Activated naive CD4-positive, alpha-beta T cell treated with anti-CD3 and anti-CD28 coated beads for 36 hours (primary cell): ENCODE measurements at regions of chr17 and their contacts with region 1.

Region 1: GRCh38 chr17:76737082-76737675 is at the start of gene SRSF2:
- DNase-seq: peak; percentile 99
- H3K4me3 Mint-ChIP-seq: peak within 1 kb of the TSS; percentile 94
- H3K27ac Mint-ChIP-seq: peak within 1 kb of the TSS; percentile 98
- H3K4me1 Mint-ChIP-seq: peaks cover 41% of the 10 kb centered on the region
- H3K27me3 Mint-ChIP-seq: no peaks in the 10 kb centered on the region
- total RNA-seq, gene SRSF2: 241 to 263 TPM

Region 2: GRCh38 chr17:76264755-76265596 is 472.2 kb before region 1 on chr17 and contains the start of gene UBALD2:
- CTCF ChIA-PET with region 1: no interaction called
- intact Hi-C with region 1: loop called (anchors 5 kb)
- DNase-seq: peak; percentile 99
- H3K4me3 Mint-ChIP-seq: peak within 1 kb of the TSS; percentile 88
- H3K27ac Mint-ChIP-seq: peak within 1 kb of the TSS; percentile 100
- H3K4me1 Mint-ChIP-seq: peaks cover 48% of the 10 kb centered on the region
- H3K27me3 Mint-ChIP-seq: no peaks in the 10 kb centered on the region
- total RNA-seq, gene UBALD2: 467 to 472 TPM

Region 3: DNA sequence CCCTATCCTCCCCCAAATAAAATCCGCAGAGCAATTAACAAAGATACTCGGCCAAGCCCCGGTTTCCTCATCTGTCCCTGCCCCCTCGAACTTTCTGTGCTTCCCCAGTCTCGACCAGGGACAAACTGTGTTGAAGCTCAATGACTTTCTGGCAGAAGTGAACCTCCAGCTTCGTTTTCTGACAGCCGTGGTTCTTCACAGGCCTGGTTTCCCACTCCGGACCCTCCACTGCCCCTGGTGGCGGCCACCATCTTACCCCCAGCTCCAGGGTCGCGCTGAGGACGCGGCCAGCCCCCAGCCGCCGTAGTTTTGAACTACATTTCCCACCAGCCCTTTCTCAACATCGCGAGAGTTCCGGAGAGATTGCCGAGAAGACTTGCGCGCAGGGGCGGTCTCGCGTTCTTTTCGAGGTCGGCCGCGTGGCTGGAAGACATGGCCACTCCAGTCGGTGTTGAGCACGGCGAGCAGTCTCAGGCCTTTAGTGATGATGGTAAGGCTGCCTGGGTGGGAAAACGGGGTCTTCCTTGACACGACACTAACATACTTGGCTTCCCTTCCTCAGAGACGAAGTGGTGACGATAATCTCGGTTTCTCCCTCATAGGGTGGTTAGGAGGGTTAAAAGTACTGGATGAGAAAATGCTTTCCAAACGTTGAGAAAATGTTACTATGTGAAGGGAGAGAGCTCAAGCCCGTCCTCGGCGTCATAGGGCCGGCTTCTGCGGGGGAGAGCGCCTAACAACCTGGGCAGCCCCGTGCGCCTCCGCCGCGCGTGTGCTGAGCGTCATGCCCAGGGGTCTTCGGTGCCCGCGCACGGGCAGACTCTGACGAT is 179.6 kb before region 1 on chr17:
- CTCF ChIA-PET with region 1: interaction called, 3 read pairs
- intact Hi-C with region 1: loop called (anchors 1 kb)
- DNase-seq: peak; percentile 97
- H3K4me3 Mint-ChIP-seq: peak overlapping the region; percentile 96
- H3K27ac Mint-ChIP-seq: peak overlapping the region; percentile 96
- H3K4me1 Mint-ChIP-seq: peaks cover 54% of the 10 kb centered on the region
- H3K27me3 Mint-ChIP-seq: no peaks in the 10 kb centered on the region

Region 4: DNA sequence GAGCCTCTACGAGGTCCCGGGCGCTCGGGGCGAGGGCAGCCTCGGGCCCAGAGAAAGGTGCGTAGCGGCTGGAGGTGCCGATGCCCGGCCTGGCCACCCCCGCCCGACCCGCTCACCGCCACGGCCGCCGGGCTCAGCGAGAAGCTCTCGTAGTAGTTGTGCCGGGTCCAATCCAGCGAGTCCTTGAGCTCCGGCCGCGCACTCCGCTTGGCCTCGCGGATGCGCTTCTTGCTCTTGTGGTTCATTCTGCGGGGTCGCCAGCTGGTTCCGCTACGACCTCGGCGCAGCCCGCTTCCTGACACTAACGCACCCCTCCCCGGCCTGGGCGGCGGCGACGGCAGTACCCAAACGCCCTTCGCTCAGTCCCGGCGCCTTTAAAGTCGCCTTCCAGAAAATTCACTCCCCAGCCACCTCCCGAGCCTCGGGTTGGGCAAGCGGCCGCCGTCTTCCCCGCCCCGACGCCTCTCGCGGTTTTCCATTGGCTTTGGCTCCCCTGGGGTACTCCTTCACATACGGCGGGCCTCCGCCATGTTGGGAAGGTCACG is 10.9 kb before region 1 on chr17 and contains the start of gene JMJD6:
- CTCF ChIA-PET with region 1: no interaction called
- intact Hi-C with region 1: loop called (anchors 1 kb)
- DNase-seq: peak; percentile 98
- H3K4me3 Mint-ChIP-seq: peak within 1 kb of the TSS; percentile 96
- H3K27ac Mint-ChIP-seq: peak within 1 kb of the TSS; percentile 93
- H3K4me1 Mint-ChIP-seq: peaks cover 66% of the 10 kb centered on the region
- H3K27me3 Mint-ChIP-seq: no peaks in the 10 kb centered on the region
- total RNA-seq, gene JMJD6: 33.0 to 33.6 TPM

Region 5: GRCh38 chr17:76772842-76773525 is 35.8 kb after region 1 on chr17:
- CTCF ChIA-PET with region 1: no interaction called
- intact Hi-C with region 1: loop called (anchors 1 kb)
- DNase-seq: peak; percentile 79
- H3K4me3 Mint-ChIP-seq: peak overlapping the region; percentile 60
- H3K27ac Mint-ChIP-seq: peak overlapping the region; percentile 92
- H3K4me1 Mint-ChIP-seq: peaks cover 23% of the 10 kb centered on the region
- H3K27me3 Mint-ChIP-seq: no peaks in the 10 kb centered on the region

Region 6: GRCh38 chr17:76997981-76998531 is 260.9 kb after region 1 on chr17:
- CTCF ChIA-PET with region 1: no interaction called
- intact Hi-C with region 1: loop called (anchors 5 kb)
- DNase-seq: peak; percentile 85
- H3K4me3 Mint-ChIP-seq: peak overlapping the region; percentile 45
- H3K27ac Mint-ChIP-seq: peak overlapping the region; percentile 78
- H3K4me1 Mint-ChIP-seq: peaks cover 55% of the 10 kb centered on the region
- H3K27me3 Mint-ChIP-seq: no peaks in the 10 kb centered on the region

Region 7: DNA sequence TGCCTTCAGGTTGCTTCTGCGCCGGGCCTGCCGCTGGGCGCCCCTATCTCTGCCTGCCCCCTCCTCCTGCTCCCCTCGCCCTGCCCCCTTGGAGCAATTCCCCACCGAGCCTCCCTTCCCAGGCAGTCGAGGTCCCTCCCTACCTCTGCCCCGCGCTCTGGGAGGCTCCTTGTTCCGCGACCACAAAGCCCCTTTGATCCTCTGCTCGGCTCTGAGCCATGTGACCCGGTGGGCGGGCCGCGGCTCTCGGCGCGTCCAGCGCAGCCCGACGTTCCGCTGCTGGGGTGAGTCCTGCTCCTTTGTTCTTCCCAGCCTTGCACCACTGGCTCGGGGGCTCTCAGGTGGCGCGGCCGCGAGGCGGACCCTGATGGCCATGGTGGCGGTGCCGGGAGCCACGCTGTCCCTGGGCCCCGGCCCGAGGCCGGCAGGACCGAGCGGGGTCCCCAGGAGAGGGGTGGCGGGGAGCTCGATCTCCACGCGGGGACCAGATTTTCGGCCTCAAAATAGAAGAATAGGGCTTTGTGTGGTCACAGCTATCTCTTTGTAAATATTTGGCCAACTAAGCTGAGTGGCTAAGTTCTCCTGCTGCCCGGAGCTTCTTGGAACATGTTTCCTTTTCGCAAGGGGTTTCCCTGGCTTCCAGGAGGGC is 714.2 kb after region 1 on chr17:
- CTCF ChIA-PET with region 1: no interaction called
- intact Hi-C with region 1: loop called (anchors 5 kb)
- DNase-seq: peak; percentile 83
- H3K4me3 Mint-ChIP-seq: peak overlapping the region; percentile 86
- H3K27ac Mint-ChIP-seq: peak overlapping the region; percentile 100
- H3K4me1 Mint-ChIP-seq: peaks cover 42% of the 10 kb centered on the region
- H3K27me3 Mint-ChIP-seq: no peaks in the 10 kb centered on the region